A549 (cell line): ENCODE measurements at regions of chr1 and their contacts with region 1.

Region 1: DNA sequence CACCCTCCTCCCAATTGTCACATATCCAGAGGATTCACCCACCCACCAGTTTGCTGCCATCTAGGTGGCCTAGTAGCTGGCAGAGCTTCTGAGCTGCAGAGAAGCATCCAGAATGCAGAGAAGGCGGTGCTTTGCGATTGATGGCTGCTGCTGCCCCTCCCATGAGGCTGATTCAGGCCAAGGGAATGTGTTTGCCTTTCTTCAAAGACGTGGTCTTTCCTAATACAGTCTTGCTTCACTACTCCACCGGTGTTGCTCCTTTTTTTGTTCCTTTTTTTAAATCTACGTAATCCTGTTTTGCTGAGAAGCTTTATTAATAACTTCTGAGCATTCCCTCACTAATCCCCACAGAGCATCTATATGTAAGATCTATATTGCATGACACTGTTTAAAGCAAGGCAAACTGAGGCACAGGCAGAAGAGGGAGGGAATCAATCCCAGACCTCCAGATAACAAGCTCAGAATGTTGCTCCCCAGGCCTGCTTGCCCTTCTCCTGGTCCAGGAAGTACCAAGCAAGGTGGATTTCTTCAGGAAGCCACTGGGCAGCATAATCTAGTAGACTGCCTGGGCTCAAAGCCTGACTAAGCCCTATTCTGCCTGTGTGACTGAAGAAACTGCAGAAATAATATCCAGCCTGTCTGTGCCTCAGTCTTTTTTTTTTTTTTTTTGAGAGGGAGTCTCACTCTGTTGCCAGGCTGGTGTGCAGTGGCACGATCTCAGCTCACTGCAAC is 275.4 kb upstream of the FMN2 start:
- DNase-seq: peak; percentile 85 to 89
- ATAC-seq: peak; percentile 87 to 92
- H3K4me3 ChIP-seq: no peak overlapping the region
- H3K27ac ChIP-seq: peak overlapping the region; percentile 66 to 89
- H3K4me1 ChIP-seq: peaks cover 36% of the 10 kb centered on the region
- CTCF ChIP-seq: 0 out of 3 replicates have a peak, but pooled peaks have one; percentile 18
- EP300 ChIP-seq: peak; percentile 86 to 88; a peak in 4 of 5 replicates
- POLR2A ChIP-seq: no peak
- RAD21 ChIP-seq: peak; percentile 2 to 54; a peak in 2 of 5 replicates

Region 2: GRCh38 chr1:239802275-239802674 is 14.0 kb before region 1 on chr1:
- CTCF ChIA-PET with region 1: interaction called, 11 read pairs
- POLR2A ChIA-PET with region 1: no interaction called
- DNase-seq: no peak
- ATAC-seq: no peak
- H3K4me3 ChIP-seq: no peak overlapping the region
- H3K27ac ChIP-seq: no peak overlapping the region
- H3K4me1 ChIP-seq: no peaks in the 10 kb centered on the region
- CTCF ChIP-seq: no peak
- EP300 ChIP-seq: no peak
- POLR2A ChIP-seq: no peak
- RAD21 ChIP-seq: no peak